GM23248 (cell line): ENCODE measurements at regions of chr12 and their contacts with region 1.

Region 1: GRCh38 chr12:76621582-76622024 is 62.0 kb upstream of the OSBPL8 start:
- DNase-seq: peak; percentile 62
- H3K4me3 ChIP-seq: no peak overlapping the region
- H3K27ac ChIP-seq: no peak overlapping the region
- H3K4me1 ChIP-seq: peaks cover 12% of the 10 kb centered on the region
- H3K27me3 ChIP-seq: no peaks in the 10 kb centered on the region

Region 2: GRCh38 chr12:76551482-76551888 is 70.1 kb before region 1 on chr12:
- in situ Hi-C with region 1: no loop called
- DNase-seq: peak; percentile 12
- H3K4me3 ChIP-seq: no peak overlapping the region
- H3K27ac ChIP-seq: no peak overlapping the region
- H3K4me1 ChIP-seq: peaks cover 58% of the 10 kb centered on the region
- H3K27me3 ChIP-seq: no peaks in the 10 kb centered on the region

Region 3: GRCh38 chr12:77010691-77011548 is 389.3 kb after region 1 on chr12:
- in situ Hi-C with region 1: loop called (anchors 25 kb)
- DNase-seq: peak; percentile 77
- H3K4me3 ChIP-seq: no peak overlapping the region
- H3K27ac ChIP-seq: no peak overlapping the region
- H3K4me1 ChIP-seq: no peaks in the 10 kb centered on the region
- H3K27me3 ChIP-seq: no peaks in the 10 kb centered on the region